ENCODE measurements at regions of chr17 and their contacts with region 1.

Region 1: GRCh38 chr17:43760254-43760852 is 1.8 kb upstream of the SOST start:
- DNase-seq: peak; percentile 93
- ATAC-seq: peak; percentile 86

Region 2: GRCh38 chr17:43694077-43694870 is 66.1 kb before region 1 on chr17:
- intact Hi-C with region 1: loop called (anchors 2 kb)
- DNase-seq: peak; percentile 79
- ATAC-seq: peak; percentile 82

Measured in left ventricle myocardium superior (tissue), 1 donor.